ENCODE measurements at regions of chr9 and their contacts with region 1.

Region 1: DNA sequence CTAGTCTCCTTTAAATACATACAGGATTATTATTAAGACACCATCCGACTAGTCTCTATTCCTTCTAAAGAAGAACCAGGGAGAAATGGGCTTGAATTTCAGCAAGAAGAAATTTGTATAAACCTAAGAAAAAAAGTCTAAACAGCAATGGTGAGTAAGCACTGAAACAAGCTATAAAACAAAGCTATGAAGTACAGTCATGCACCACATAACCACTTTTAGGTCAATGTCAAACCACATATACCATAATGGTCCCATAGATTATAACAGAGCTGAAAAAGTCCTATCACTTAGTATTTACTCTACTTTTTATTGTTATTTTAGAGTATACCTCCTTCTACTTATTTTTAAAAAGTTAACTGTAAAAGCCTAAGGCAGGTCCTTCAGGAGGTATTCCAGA is 102.0 kb upstream of the NFIB start:
- DNase-seq: no peak
- H3K4me3 ChIP-seq: no peak overlapping the region
- H3K27ac ChIP-seq: no peak overlapping the region
- H3K4me1 ChIP-seq: peaks cover 27% of the 10 kb centered on the region
- H3K27me3 ChIP-seq: no peaks in the 10 kb centered on the region
- CTCF ChIP-seq: no peak

Region 2: GRCh38 chr9:13979941-13980318 is 436.0 kb before region 1 on chr9:
- CTCF ChIA-PET with region 1: no interaction called
- POLR2A ChIA-PET with region 1: no interaction called
- intact Hi-C with region 1: no loop called
- DNase-seq: no peak
- H3K4me3 ChIP-seq: no peak overlapping the region
- H3K27ac ChIP-seq: no peak overlapping the region
- H3K4me1 ChIP-seq: no peaks in the 10 kb centered on the region
- H3K27me3 ChIP-seq: no peaks in the 10 kb centered on the region
- CTCF ChIP-seq: no peak

Region 3: DNA sequence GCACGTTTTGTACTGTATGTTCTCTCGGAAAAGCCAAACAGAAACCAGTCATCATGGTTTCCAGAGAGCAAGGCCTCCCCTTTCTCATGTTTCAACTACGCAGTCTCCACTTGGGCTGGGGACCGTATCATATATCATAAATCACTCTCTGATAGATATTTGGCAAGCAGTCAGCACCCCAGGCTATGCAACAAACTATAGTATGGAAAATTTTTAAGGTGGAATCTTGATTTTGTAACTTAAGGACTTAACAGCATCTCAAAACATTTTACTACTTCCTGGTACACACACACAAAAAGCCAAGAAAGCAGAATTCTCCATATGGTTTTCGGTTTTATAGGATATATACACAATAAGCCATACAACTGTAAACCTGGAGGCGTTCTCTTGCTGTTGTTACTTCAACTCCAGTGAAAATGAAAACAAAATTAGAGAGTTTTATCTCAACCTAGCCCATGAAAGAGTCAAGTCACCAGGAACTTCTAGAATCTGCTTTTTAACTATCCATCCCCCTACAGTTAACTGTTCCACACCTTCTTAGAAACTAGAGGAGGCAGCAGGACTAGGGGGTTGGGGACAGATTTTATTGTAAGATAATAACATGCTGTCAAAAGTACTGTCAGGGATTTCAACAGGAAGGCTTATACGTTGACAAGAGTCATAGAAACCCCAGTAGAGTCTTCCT is 385.4 kb before region 1 on chr9:
- CTCF ChIA-PET with region 1: no interaction called
- POLR2A ChIA-PET with region 1: no interaction called
- intact Hi-C with region 1: loop called (anchors 10 kb)
- DNase-seq: peak; percentile 87
- H3K4me3 ChIP-seq: peak overlapping the region; percentile 31
- H3K27ac ChIP-seq: peak overlapping the region; percentile 89
- H3K4me1 ChIP-seq: peaks cover 45% of the 10 kb centered on the region
- H3K27me3 ChIP-seq: no peaks in the 10 kb centered on the region
- CTCF ChIP-seq: no peak

Region 4: DNA sequence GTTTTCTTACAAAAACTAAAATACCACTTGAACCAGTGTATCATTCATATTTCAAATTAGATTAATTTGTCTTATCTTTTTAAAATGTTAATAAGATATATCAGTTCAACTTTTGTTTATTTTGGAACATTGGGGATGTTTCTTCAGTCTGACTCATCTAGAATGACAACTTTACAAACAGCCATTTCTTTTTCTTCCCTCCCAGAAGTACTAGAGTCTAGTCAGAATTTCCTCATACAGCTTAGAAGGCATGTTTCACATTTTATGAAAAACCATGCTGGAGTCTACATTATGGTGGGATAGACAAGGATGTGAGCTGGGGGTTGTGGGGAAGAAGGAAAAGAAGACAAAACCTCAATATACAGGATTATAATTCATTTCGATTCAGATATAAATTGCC is 364.5 kb before region 1 on chr9:
- CTCF ChIA-PET with region 1: no interaction called
- POLR2A ChIA-PET with region 1: interaction called, 11 read pairs
- intact Hi-C with region 1: no loop called
- DNase-seq: no peak
- H3K4me3 ChIP-seq: no peak overlapping the region
- H3K27ac ChIP-seq: no peak overlapping the region
- H3K4me1 ChIP-seq: peaks cover 16% of the 10 kb centered on the region
- H3K27me3 ChIP-seq: no peaks in the 10 kb centered on the region
- CTCF ChIP-seq: no peak

Measured in A673 (cell line).